CD4-positive, alpha-beta T cell (primary cell): ENCODE measurements at regions of chr19 and their contacts with region 1.

Region 1: DNA sequence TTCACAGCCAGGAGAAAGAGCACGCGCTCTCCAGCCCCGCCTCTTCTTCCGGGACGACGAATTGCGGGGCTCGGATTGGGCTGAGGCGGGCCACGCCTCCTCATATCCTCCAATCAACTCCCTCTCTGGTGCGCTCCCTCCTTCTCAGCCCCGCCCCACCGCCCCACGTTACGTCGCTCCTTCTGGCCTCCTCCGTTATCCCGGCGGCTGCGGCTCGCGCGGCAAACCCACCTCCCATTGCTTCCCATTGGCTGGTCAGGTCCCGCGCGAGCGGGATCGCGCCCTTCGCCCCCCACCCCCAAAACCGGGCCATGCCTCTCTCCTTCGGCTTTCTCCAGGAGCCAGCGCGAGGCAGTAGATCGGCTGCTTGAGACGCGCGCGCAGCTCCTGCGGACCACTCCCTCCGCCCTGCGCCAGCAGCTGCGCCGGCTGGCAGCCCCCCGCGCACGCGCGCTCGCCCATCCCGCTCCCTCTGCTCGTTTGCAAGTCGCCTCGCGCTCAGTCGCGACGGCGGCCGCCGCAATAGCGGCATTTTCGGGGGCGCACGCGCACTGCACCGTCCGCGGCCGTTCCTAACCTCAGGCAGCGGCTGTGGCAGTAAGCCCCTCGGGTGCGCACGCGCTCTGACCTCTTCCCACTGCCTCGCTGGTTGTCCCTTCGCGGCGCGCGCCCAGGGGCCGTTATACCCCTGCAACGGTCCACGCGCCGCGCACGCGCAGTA is 512 bp upstream of the ARHGAP35 start:
- DNase-seq: peak; percentile 86 to 98 (median 92)
- ATAC-seq: peak; percentile 77
- H3K4me3 ChIP-seq: peak overlapping the region; percentile 62
- H3K4me3 Mint-ChIP-seq: peak overlapping the region; percentile 95
- H3K27ac ChIP-seq: peak overlapping the region; percentile 77 to 91
- H3K27ac Mint-ChIP-seq: peak overlapping the region; percentile 84
- H3K4me1 ChIP-seq: peaks cover 49% of the 10 kb centered on the region
- H3K4me1 Mint-ChIP-seq: peaks cover 16% of the 10 kb centered on the region
- H3K27me3 ChIP-seq: no peaks in the 10 kb centered on the region
- H3K27me3 Mint-ChIP-seq: no peaks in the 10 kb centered on the region
- CTCF ChIP-seq: no peak

Region 2: DNA sequence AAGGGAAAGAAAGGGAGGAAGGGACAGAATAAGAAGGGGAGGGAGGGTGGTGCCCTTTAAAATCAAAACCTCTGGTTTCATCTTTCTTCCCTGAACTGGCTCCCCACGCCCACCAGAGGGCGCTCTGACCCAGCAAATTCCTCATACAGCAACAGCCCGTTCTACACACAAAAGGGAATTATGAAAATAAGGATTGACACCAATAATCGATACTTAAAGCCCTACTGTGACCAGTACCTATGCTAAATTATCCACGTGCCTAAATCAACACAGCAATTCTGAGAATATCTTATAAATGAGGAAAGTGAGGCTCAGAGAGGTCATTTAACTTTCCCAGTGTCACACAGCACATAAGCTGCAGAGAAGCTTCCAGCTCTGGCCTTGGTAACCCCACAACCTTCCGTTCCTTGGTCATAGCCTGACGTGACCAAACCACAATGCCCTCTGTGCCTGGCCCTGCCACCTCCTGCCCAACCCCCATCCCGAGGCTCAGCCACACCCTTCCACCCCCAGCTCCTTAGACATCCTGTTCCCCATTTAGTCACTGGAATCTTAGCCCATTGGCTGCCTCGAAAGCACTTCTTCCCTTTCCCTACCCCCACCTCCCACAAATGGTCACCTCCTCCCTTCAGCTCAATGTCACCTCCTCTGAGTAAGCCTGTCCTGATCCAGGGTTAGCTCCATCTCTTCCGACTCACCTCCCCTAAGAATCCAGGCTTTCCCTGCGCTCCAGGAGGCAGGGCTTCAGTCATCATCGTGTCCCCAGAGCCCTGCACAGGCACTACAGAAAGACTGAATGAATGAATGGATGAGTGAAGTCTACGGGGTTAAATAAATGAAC is 330.4 kb before region 1 on chr19:
- CTCF ChIA-PET with region 1: no interaction called
- POLR2A ChIA-PET with region 1: no interaction called
- intact Hi-C with region 1: no loop called
- DNase-seq: peak; percentile 58 to 89 (median 75)
- ATAC-seq: peak; percentile 79
- H3K4me3 ChIP-seq: no peak overlapping the region
- H3K4me3 Mint-ChIP-seq: no peak overlapping the region
- H3K27ac ChIP-seq: no peak overlapping the region
- H3K27ac Mint-ChIP-seq: peak overlapping the region; percentile 8
- H3K4me1 ChIP-seq: peaks cover 16% of the 10 kb centered on the region
- H3K4me1 Mint-ChIP-seq: peaks cover 20% of the 10 kb centered on the region
- H3K27me3 ChIP-seq: no peaks in the 10 kb centered on the region
- H3K27me3 Mint-ChIP-seq: no peaks in the 10 kb centered on the region
- CTCF ChIP-seq: peak; percentile 98

Region 3: GRCh38 chr19:46745521-46746280 is 114.6 kb before region 1 on chr19 and contains the start of gene FKRP:
- CTCF ChIA-PET with region 1: no interaction called
- POLR2A ChIA-PET with region 1: no interaction called
- intact Hi-C with region 1: no loop called
- DNase-seq: peak in 8 of 14 experiments; percentile 27 to 59 (median 40)
- ATAC-seq: peak; percentile 59
- H3K4me3 ChIP-seq: peak within 1 kb of the TSS; percentile 78
- H3K4me3 Mint-ChIP-seq: peak within 1 kb of the TSS; percentile 94
- H3K27ac ChIP-seq: peak within 1 kb of the TSS; percentile 9 to 29
- H3K27ac Mint-ChIP-seq: peak within 1 kb of the TSS; percentile 87
- H3K4me1 ChIP-seq: peaks cover 49% of the 10 kb centered on the region
- H3K4me1 Mint-ChIP-seq: peaks cover 58% of the 10 kb centered on the region
- H3K27me3 ChIP-seq: no peaks in the 10 kb centered on the region
- H3K27me3 Mint-ChIP-seq: no peaks in the 10 kb centered on the region
- CTCF ChIP-seq: no peak
- total RNA-seq, gene FKRP: 19.0 to 20.2 TPM

Region 4: DNA sequence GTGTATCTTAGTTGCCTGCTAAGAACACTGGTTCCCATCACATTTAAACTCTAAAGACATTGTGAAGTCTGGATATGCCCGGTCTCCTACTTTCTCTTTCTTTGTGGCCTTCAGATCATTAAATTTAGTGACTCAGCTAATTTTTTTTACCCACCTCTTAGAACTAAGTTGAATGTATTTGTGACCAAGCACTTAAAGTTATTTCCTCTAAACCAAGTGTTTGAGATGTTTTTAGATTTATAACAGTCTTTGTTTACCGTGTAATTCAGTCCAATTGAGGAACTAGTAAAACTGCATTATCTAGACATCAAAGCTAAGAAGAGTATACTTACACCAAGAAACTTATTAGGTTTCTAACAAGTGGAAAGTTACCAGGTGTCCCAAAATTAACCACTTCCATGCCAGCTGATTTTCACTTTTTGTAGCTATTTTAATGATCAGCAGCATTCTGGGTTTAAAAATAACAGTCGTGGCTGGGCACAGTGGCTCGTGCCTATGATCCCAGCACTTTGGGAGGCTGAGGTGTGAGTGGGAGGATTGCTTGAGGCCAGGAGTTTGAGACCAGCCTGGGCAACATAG is 53.7 kb after region 1 on chr19:
- CTCF ChIA-PET with region 1: no interaction called
- POLR2A ChIA-PET with region 1: no interaction called
- intact Hi-C with region 1: loop called in 1 of 2 experiments (anchors 10 kb)
- DNase-seq: peak in 2 of 14 experiments; percentile 16 to 50
- ATAC-seq: no peak
- H3K4me3 ChIP-seq: no peak overlapping the region
- H3K4me3 Mint-ChIP-seq: peak overlapping the region; percentile 5
- H3K27ac ChIP-seq: no peak overlapping the region
- H3K27ac Mint-ChIP-seq: peak overlapping the region; percentile 41
- H3K4me1 ChIP-seq: peaks cover 12% of the 10 kb centered on the region
- H3K4me1 Mint-ChIP-seq: peaks cover 50% of the 10 kb centered on the region
- H3K27me3 ChIP-seq: no peaks in the 10 kb centered on the region
- H3K27me3 Mint-ChIP-seq: no peaks in the 10 kb centered on the region
- CTCF ChIP-seq: no peak

Region 5: GRCh38 chr19:46932346-46932745 is 72.1 kb after region 1 on chr19:
- CTCF ChIA-PET with region 1: no interaction called
- POLR2A ChIA-PET with region 1: interaction called, 3 read pairs
- intact Hi-C with region 1: loop called in 1 of 2 experiments (anchors 5 kb)
- DNase-seq: no peak
- ATAC-seq: no peak
- H3K4me3 ChIP-seq: no peak overlapping the region
- H3K4me3 Mint-ChIP-seq: no peak overlapping the region
- H3K27ac ChIP-seq: no peak overlapping the region
- H3K27ac Mint-ChIP-seq: peak overlapping the region; percentile 82
- H3K4me1 ChIP-seq: peaks cover 65% of the 10 kb centered on the region
- H3K4me1 Mint-ChIP-seq: peaks cover 70% of the 10 kb centered on the region
- H3K27me3 ChIP-seq: no peaks in the 10 kb centered on the region
- H3K27me3 Mint-ChIP-seq: no peaks in the 10 kb centered on the region
- CTCF ChIP-seq: no peak

Region 6: DNA sequence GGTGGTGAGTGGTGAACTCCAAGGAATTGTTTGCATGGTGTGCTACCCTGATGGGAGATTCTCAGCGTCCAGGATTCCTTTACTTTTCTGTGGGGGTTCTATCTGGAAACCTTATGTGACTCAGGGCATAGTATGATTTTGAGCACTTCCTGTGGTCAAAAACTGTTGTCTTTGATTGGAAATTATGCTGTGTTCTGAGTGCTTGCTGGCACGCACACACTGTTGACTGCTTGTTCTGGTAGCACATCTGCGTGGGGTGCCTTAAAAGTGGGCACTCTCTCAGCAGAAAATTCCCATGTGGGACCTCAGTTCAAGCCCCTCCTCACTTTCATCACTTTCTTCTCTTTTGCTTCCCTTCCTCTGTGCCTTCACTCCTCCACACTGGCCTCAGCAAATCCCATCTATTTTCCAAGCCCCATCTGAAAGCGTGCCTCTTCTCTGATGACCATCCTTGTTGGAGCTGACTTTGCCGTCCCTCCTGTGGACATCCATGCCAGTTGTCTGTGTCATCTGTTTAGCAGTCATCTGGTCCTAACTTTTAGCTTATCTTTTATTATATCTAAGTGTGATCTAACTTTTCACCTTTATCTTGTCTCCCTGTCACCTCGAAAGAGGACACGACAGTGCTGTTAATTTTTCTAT is 102.9 kb after region 1 on chr19:
- CTCF ChIA-PET with region 1: no interaction called
- POLR2A ChIA-PET with region 1: no interaction called
- intact Hi-C with region 1: no loop called
- DNase-seq: no peak
- ATAC-seq: no peak
- H3K4me3 ChIP-seq: no peak overlapping the region
- H3K4me3 Mint-ChIP-seq: no peak overlapping the region
- H3K27ac ChIP-seq: no peak overlapping the region
- H3K27ac Mint-ChIP-seq: no peak overlapping the region
- H3K4me1 ChIP-seq: peaks cover 49% of the 10 kb centered on the region
- H3K4me1 Mint-ChIP-seq: peaks cover 39% of the 10 kb centered on the region
- H3K27me3 ChIP-seq: no peaks in the 10 kb centered on the region
- H3K27me3 Mint-ChIP-seq: no peaks in the 10 kb centered on the region
- CTCF ChIP-seq: no peak

Region 7: GRCh38 chr19:46990991-46991676 is 130.8 kb after region 1 on chr19:
- CTCF ChIA-PET with region 1: interaction called, 7 read pairs
- POLR2A ChIA-PET with region 1: no interaction called
- intact Hi-C with region 1: loop called (anchors 1 kb)
- DNase-seq: peak; percentile 27 to 80 (median 50)
- ATAC-seq: peak; percentile 63
- H3K4me3 ChIP-seq: no peak overlapping the region
- H3K4me3 Mint-ChIP-seq: no peak overlapping the region
- H3K27ac ChIP-seq: no peak overlapping the region
- H3K27ac Mint-ChIP-seq: no peak overlapping the region
- H3K4me1 ChIP-seq: peaks cover 16% of the 10 kb centered on the region
- H3K4me1 Mint-ChIP-seq: peaks cover 12% of the 10 kb centered on the region
- H3K27me3 ChIP-seq: no peaks in the 10 kb centered on the region
- H3K27me3 Mint-ChIP-seq: no peaks in the 10 kb centered on the region
- CTCF ChIP-seq: peak; percentile 74

Region 8: DNA sequence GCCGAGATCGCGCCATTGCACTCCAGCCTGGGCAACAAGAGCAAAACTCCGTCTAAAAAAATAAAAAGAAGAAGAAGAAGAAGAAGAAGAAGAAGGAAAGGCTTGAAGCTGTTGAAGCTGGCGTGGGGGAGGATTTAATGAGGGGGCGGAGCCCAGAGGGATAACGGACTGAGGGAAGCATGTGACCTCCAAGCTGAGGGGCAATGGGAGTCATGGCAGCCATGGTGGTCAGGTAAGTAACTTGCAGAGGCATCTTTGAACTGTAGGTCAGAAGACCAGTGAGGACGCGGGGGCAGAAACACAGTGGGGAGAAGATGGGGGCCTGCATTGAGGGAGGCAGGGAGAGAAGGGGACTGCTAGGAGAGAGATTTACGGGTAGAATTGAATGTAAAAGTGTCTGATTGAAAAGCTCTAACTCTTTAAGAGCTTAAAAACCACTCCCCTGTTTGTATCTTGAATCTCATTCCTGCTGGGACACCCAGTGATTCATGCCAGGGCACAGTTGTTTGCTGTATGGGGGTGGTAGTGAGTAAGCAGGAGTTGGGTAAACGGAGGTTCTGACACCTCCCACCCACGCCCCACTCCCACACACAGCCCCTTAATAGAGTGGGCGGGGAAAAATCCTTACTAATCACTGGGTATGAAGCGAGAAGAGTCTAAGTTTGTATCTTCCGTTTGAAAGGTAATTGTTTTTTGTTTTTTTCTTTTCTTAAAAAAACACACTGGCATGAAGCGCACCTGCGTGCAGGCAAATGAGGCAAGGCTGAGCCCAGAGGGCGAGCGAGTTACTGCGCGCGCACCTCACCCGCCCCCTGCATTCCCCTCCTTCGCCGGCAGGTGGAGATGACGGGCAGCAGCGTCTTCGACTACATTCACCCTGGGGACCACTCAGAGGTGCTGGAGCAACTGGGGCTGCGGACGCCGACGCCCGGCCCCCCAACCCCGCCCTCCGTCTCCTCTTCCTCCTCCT is 175.1 kb after region 1 on chr19:
- CTCF ChIA-PET with region 1: interaction called, 3 read pairs
- POLR2A ChIA-PET with region 1: no interaction called
- intact Hi-C with region 1: loop called (anchors 1 to 2 kb)
- DNase-seq: peak; percentile 88 to 99 (median 95)
- ATAC-seq: peak; percentile 96
- H3K4me3 ChIP-seq: peak overlapping the region; percentile 51
- H3K4me3 Mint-ChIP-seq: peak overlapping the region; percentile 94
- H3K27ac ChIP-seq: no peak overlapping the region
- H3K27ac Mint-ChIP-seq: peak overlapping the region; percentile 85
- H3K4me1 ChIP-seq: peaks cover 30% of the 10 kb centered on the region
- H3K4me1 Mint-ChIP-seq: peaks cover 15% of the 10 kb centered on the region
- H3K27me3 ChIP-seq: peaks cover 4 to 5% of the 10 kb centered on the region in 2 experiments
- H3K27me3 Mint-ChIP-seq: peaks cover 23% of the 10 kb centered on the region
- CTCF ChIP-seq: peak; percentile 98

Region 9: DNA sequence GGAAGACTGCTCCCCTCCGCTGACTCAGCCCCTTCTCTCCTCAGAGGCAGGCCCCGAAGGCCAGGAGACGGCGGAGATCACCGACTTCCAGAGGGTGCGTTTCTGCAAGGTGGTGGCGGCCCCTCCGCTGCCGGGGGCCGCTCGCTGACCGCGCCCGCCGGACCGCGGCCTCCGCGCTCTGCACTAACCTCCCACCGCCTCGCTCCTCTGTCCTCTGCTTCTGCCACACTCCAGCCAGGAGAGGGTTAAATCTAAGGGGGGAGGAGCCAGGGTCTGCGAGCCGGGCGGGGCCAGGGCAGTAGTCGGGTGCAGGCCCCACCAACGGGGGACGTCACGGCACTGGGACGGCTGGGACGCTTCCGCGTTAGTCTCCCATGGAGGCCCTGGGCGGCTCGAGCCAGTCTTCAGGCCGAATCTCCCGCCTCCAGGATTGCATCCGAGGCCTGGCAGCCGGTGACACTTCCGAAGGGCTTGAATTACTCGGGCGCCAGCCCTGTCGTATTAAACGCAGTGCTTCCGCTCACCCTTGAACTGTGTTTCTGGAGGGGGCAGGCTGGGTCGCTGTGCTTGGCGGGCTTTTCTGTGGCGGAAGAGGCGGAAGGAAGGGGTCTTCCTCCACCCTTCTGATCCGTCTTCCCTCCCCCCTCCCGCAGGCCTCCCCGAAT is 413.2 kb after region 1 on chr19:
- CTCF ChIA-PET with region 1: no interaction called
- POLR2A ChIA-PET with region 1: no interaction called
- intact Hi-C with region 1: loop called in 1 of 2 experiments (anchors 5 kb)
- DNase-seq: peak; percentile 82 to 95 (median 88)
- ATAC-seq: peak; percentile 63
- H3K4me3 ChIP-seq: peak overlapping the region; percentile 100
- H3K4me3 Mint-ChIP-seq: peak overlapping the region; percentile 100
- H3K27ac ChIP-seq: peak overlapping the region; percentile 92 to 99
- H3K27ac Mint-ChIP-seq: peak overlapping the region; percentile 99
- H3K4me1 ChIP-seq: peaks cover 24% of the 10 kb centered on the region
- H3K4me1 Mint-ChIP-seq: peaks cover 28% of the 10 kb centered on the region
- H3K27me3 ChIP-seq: no peaks in the 10 kb centered on the region
- H3K27me3 Mint-ChIP-seq: no peaks in the 10 kb centered on the region
- CTCF ChIP-seq: no peak